Transverse colon (tissue), 4 donors: ENCODE measurements at regions of chr2 and their contacts with region 1.

Region 1: DNA sequence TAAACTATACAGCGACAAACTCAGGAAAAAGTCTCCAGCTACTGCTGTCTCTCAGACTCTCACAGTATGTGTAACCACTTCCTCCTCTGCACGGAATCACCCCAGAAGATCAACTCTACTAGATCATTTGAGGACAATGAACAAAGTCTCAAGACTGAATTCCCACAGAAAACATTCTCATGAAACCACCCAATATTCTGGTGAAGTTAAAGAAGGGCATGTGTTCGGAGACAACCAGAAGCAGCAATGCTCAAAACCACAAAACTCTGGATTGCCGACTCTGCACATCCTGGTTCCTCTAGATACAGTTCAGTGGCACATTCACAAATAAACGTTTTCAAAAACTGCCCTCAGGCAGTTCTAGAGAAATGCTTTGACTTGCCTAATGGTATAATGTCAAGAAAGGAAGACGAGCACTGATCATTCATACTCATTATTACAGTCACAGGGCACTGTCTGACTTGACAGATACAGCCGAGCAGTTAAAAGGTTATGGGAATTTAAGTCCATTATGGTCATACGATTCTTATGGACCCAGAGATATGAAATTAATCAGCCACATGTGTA is 91.9 kb upstream of the STK17B start:
- DNase-seq: peak; percentile 9
- H3K4me3 ChIP-seq: no peak overlapping the region
- H3K27ac ChIP-seq: peak overlapping the region; percentile 54 to 65 (median 58)
- H3K4me1 ChIP-seq: peaks cover 0 to 10% (median 0%) of the 10 kb centered on the region in 4 donors
- H3K27me3 ChIP-seq: no peaks in the 10 kb centered on the region
- CTCF ChIP-seq: no peak
- EP300 ChIP-seq: no peak
- POLR2A ChIP-seq: peak; percentile 23

Region 2: GRCh38 chr2:196171248-196171871 is 91.9 kb before region 1 on chr2 and contains the start of gene STK17B:
- in situ Hi-C with region 1: loop called in 1 of 4 experiments (anchors 25 kb)
- intact Hi-C with region 1: no loop called
- DNase-seq: peak; percentile 98
- H3K4me3 ChIP-seq: peak within 1 kb of the TSS; percentile 75 to 92 (median 82)
- H3K27ac ChIP-seq: peak within 1 kb of the TSS; percentile 94 to 97 (median 95)
- H3K4me1 ChIP-seq: peaks cover 0 to 12% (median 0%) of the 10 kb centered on the region in 4 donors
- H3K27me3 ChIP-seq: no peaks in the 10 kb centered on the region
- CTCF ChIP-seq: peak in 1 of 5 experiments; percentile 44
- EP300 ChIP-seq: no peak
- POLR2A ChIP-seq: peak; percentile 98
- total RNA-seq, gene STK17B: 16.7 to 80.3 (median 67.3) TPM

Region 3: DNA sequence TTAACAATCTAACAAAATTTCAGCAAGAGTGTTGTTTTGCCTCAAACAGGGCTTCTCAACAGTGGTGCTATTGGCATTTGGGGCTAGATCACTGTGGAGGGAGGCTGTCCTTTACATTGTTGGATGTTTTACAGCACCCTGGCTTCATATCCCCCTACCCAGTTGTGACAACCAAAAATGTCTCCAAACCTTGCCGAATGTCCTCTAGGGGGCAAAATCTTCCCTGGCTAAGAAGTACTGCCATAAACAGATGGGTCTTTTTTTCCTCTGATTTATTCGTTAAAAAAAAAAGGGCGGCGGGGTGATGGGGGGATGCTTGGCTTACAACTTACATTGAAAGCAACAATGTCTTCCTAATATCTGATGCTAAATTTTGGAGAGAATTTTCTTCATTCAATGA is 168.7 kb after region 1 on chr2:
- in situ Hi-C with region 1: no loop called
- intact Hi-C with region 1: no loop called
- DNase-seq: no peak
- H3K4me3 ChIP-seq: no peak overlapping the region
- H3K27ac ChIP-seq: no peak overlapping the region
- H3K4me1 ChIP-seq: no peaks in the 10 kb centered on the region
- H3K27me3 ChIP-seq: no peaks in the 10 kb centered on the region
- CTCF ChIP-seq: no peak
- EP300 ChIP-seq: no peak
- POLR2A ChIP-seq: no peak